ENCODE measurements at regions of chr10 and their contacts with region 1.

Region 1: DNA sequence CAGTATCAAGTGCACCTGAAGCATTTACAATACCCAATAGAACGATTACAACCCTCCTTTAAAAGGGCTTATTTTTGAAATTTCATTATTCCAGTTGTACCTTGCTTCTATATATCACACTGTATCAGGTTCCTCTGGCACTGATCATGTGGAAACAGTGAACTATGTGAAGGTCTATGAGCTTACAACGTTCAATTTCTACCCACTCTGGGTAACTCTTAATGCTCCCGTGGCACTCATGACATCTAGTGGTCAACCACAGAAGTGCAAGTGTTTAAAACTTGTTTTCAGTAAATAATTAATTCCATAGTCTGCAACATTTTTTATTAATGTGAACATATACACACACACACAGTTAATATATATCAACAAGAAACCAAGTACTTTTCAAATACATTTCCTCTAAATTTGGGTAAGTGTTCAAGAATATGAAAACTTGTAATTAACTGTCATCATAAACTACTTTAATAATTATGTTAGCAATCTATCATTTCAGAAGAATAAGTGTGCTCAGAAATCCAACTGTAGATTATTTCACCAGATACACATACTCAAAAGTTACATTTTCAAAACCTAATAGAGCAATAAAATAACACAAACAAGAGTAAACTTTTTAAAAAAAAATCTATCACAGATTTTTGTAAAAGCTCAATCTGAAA is 61.0 kb downstream of the MPP7 start:
- DNase-seq: no peak
- ATAC-seq: peak; percentile 71

Region 2: GRCh38 chr10:27742195-27743011 is 499.5 kb before region 1 on chr10:
- intact Hi-C with region 1: loop called in 1 of 2 experiments (anchors 5 kb)
- DNase-seq: peak; percentile 60 to 81
- ATAC-seq: peak; percentile 95

Region 3: GRCh38 chr10:28631896-28632596 is 390.2 kb after region 1 on chr10:
- intact Hi-C with region 1: no loop called
- DNase-seq: no peak
- ATAC-seq: no peak